IMR-90 (cell line): ENCODE measurements at regions of chr12 and their contacts with region 1.

Region 1: DNA sequence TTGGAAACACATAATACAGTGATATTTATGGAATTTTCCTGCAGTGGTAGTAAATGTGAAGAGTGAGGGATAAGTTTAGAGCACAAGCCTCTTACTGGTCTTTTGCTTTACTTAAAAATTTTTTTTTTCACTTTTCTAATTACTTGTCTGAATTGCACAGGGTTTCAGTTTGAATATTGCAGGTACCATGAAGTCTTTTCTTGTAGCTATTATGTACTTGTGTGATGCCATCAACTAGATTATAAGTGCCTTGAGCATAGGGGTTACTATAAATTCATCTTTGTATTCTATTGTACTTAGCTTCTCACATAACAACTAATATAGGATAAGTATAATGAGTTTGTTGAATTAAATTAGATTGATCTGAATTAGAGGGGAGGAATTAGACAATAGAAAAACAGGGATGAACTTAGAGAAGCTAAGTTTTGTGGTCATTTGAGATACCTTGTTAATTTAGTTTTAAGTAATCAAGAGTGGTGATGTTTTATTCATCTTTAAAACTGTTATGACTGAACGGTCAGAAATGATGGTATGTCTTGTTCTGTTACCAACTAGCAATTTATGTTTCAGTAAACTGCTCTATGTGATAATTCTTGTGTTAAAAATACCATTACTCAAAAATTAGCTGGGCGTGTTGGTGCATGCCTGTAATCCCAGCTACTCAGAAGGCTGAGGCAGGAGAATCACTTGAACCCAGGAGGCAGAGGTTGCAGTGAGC is 42.1 kb downstream of the CCDC91 start:
- DNase-seq: no peak
- ATAC-seq: no peak
- H3K4me3 ChIP-seq: no peak overlapping the region
- H3K27ac ChIP-seq: no peak overlapping the region
- H3K4me1 ChIP-seq: no peaks in the 10 kb centered on the region
- H3K27me3 ChIP-seq: no peaks in the 10 kb centered on the region
- CTCF ChIP-seq: no peak
- POLR2A ChIP-seq: no peak
- RAD21 ChIP-seq: no peak

Region 2: DNA sequence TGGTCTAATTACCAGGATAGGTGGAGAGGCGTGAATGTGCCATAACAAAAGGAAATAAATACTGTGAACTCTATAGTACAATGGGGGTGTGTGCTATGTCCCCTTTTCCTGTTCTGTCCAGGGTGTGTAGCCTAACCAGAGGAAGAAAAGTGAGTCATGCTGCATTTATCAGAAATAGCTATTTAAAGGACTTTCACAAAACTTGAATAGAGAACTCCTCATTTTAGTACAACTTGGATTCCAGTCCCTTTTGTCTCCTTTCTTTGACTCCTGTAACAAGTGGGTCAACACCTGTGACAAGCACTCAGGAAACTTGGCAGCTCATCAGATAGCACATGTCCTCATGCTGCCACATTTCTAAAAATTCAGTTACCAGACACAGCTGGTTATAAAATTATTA is 81.3 kb after region 1 on chr12:
- CTCF ChIA-PET with region 1: no interaction called
- POLR2A ChIA-PET with region 1: no interaction called
- dilution Hi-C with region 1: no loop called
- in situ Hi-C with region 1: no loop called
- intact Hi-C with region 1: no loop called
- DNase-seq: peak; percentile 43
- ATAC-seq: peak; percentile 78
- H3K4me3 ChIP-seq: no peak overlapping the region
- H3K27ac ChIP-seq: no peak overlapping the region
- H3K4me1 ChIP-seq: peaks cover 2% of the 10 kb centered on the region; the same call in 1 of the 2 replicates
- H3K27me3 ChIP-seq: no peaks in the 10 kb centered on the region
- CTCF ChIP-seq: no peak
- POLR2A ChIP-seq: no peak
- RAD21 ChIP-seq: no peak

Region 3: GRCh38 chr12:28866715-28867503 is 634.5 kb after region 1 on chr12:
- CTCF ChIA-PET with region 1: no interaction called
- POLR2A ChIA-PET with region 1: interaction called, 12 read pairs
- dilution Hi-C with region 1: no loop called
- in situ Hi-C with region 1: no loop called
- intact Hi-C with region 1: no loop called
- DNase-seq: no peak
- ATAC-seq: no peak
- H3K4me3 ChIP-seq: no peak overlapping the region
- H3K27ac ChIP-seq: no peak overlapping the region
- H3K4me1 ChIP-seq: peaks cover 2% of the 10 kb centered on the region; the same call in 1 of the 2 replicates
- H3K27me3 ChIP-seq: no peaks in the 10 kb centered on the region
- CTCF ChIP-seq: no peak
- POLR2A ChIP-seq: no peak
- RAD21 ChIP-seq: no peak